Activated CD8-positive, alpha-beta T cell treated with anti-CD3 and anti-CD28 coated beads, Interleukin-2, amount 10 ng/mL, durations not matched to agents 7 days and 5 days (primary cell): ENCODE measurements at regions of chr15 and their contacts with region 1.

Region 1: GRCh38 chr15:44711356-44712107 is at the start of gene B2M:
- DNase-seq: peak; percentile 97
- ATAC-seq: peak; percentile 73
- H3K4me3 Mint-ChIP-seq: peak within 1 kb of the TSS; percentile 99
- H3K27ac Mint-ChIP-seq: peak within 1 kb of the TSS; percentile 96
- H3K4me1 Mint-ChIP-seq: peaks cover 39% of the 10 kb centered on the region
- H3K27me3 Mint-ChIP-seq: no peaks in the 10 kb centered on the region
- total RNA-seq, gene B2M: 6,300 to 6,473 TPM

Region 2: GRCh38 chr15:44545913-44546802 is 165.4 kb before region 1 on chr15:
- CTCF ChIA-PET with region 1: no interaction called
- POLR2A ChIA-PET with region 1: interaction called, 11 read pairs
- DNase-seq: peak; percentile 44
- ATAC-seq: peak; percentile 77
- H3K4me3 Mint-ChIP-seq: peak overlapping the region; percentile 32
- H3K27ac Mint-ChIP-seq: peak overlapping the region; percentile 83
- H3K4me1 Mint-ChIP-seq: peaks cover 41% of the 10 kb centered on the region
- H3K27me3 Mint-ChIP-seq: no peaks in the 10 kb centered on the region

Region 3: DNA sequence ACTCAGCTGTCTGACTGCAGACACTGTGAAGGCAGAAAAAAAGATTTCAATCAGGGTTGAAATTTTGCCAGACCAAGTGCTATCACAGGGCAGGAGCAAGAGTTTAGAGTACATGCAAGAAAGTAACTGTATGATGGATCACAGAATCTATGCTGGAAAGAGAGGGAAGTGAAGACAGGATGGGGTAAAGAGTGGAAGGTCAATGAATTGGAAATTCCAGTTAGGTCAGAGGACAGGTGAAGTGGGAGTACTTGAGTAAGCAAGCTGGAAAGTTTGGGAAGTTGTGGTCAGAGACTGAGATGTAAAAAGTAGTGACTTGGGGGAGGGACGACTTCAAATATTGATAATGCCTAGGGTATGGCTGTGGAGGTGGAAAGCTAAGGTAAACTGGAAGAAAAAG is 55.2 kb before region 1 on chr15:
- CTCF ChIA-PET with region 1: interaction called, 4 read pairs
- POLR2A ChIA-PET with region 1: interaction called, 1,989 read pairs
- DNase-seq: no peak
- ATAC-seq: no peak
- H3K4me3 Mint-ChIP-seq: no peak overlapping the region
- H3K27ac Mint-ChIP-seq: no peak overlapping the region
- H3K4me1 Mint-ChIP-seq: peaks cover 12% of the 10 kb centered on the region
- H3K27me3 Mint-ChIP-seq: no peaks in the 10 kb centered on the region

Region 4: GRCh38 chr15:44676676-44677075 is 34.9 kb before region 1 on chr15:
- CTCF ChIA-PET with region 1: interaction called, 476 read pairs
- POLR2A ChIA-PET with region 1: interaction called, 1,989 read pairs
- DNase-seq: peak; percentile 61
- ATAC-seq: peak; percentile 48
- H3K4me3 Mint-ChIP-seq: peak overlapping the region; percentile 70
- H3K27ac Mint-ChIP-seq: peak overlapping the region; percentile 95
- H3K4me1 Mint-ChIP-seq: peaks cover 82% of the 10 kb centered on the region
- H3K27me3 Mint-ChIP-seq: no peaks in the 10 kb centered on the region

Region 5: DNA sequence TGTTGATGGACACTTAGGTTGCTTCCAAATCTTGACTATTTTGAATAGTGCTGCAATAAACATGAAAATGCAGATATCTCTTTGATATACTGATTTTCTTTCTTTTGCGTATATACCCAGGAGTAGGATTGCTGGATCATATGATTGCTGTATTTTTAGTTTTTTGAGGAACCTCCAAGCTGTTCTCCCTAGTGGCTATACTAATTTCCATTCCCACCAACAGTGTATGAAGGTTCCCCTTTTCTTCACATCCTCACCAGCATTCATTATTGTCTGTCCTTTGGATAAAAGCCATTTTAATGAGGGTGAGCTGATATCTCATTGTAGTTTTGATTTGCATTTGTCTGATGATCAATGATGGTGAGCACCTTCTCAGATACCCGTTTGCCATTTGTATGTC is 12.9 kb before region 1 on chr15:
- CTCF ChIA-PET with region 1: interaction called, 12 read pairs
- POLR2A ChIA-PET with region 1: interaction called, 19 read pairs
- DNase-seq: no peak
- ATAC-seq: no peak
- H3K4me3 Mint-ChIP-seq: no peak overlapping the region
- H3K27ac Mint-ChIP-seq: no peak overlapping the region
- H3K4me1 Mint-ChIP-seq: peaks cover 20% of the 10 kb centered on the region
- H3K27me3 Mint-ChIP-seq: peaks cover 1% of the 10 kb centered on the region